ENCODE measurements at regions of chr10 and their contacts with region 1.

Region 1: DNA sequence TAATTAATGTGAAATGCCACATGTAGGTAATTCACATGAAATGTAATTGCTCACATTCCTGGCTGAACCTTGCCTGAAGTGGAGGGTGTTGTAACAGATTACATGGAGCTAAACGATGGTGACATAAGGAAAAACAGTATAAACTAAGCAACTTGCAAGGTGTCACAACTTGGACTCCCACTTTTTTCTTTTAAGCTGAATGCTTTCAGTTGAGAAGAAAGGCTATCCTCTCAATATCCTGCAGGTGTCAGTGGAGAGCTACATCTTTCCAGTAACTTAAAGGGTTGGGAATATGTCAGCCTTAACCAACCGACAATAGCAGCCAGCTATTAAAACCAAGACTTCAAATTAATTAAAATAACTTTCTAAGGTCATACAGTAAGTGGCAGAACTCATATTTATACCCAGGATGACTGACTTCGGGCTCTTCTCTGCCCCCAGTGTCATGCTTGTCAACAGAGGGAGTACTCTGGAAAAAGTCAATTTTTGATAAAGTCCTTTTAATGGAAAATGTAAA is 33.7 kb downstream of the NRBF2 start:
- DNase-seq: no peak
- ATAC-seq: peak; percentile 49

Region 2: DNA sequence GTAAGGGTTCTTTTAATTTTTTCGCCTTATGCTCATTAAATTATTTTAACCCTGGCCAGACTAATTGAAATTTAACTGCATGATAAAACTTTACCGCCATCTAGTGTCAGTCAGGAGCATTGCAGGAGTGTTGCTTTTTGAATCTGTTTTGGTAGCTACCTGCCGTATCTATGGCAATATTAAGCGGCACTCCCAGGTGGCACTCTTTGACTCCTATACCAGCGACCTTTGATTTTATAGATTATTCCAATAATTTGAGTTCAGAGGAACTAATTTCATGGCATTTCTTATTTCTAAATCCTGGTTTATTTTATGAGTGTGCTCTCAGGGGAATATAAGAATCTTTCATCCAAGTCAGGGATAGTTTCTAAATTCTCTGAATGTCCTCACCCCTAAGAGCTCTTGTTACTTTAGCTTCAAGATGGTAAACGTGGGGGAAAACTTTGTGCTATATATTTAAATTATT is 553.3 kb after region 1 on chr10:
- intact Hi-C with region 1: loop called (anchors 2 kb)
- DNase-seq: no peak
- ATAC-seq: peak; percentile 44

Region 3: DNA sequence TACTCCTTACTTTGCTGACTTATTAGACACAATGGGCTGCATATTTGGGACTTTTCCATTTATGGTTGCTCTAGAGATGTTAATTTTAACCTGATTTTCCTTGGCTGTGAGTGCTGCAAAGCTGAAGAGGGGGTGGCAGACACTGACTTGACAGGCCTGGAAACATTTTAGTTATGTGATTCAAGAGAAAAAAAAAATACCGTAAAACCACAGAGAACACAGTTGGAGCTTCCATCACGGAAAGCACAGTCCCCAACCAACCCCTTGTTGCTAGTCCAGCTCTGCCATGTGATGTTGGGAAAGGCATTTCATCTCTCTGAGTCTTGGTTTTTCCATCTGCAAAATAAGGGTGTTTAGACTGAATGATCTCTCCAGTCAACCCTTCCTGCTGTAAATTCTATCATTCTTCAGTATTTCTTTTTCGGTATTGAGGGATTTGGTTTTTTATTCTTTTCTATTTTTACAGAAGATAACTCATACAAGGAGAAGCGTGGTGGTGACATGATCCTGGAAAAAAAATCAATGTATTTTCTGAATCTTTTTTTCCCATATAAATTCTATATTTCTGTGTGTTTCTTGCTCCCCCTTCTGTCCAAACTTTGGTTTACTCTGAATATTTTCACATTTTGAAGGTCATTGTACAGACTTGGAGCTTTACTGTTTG is 600.5 kb after region 1 on chr10:
- intact Hi-C with region 1: loop called (anchors 5 kb)
- DNase-seq: no peak
- ATAC-seq: no peak

Region 4: GRCh38 chr10:63819753-63820329 is 653.0 kb after region 1 on chr10:
- intact Hi-C with region 1: loop called (anchors 2 kb)
- DNase-seq: peak; percentile 75
- ATAC-seq: peak; percentile 50